Activated B cell treated with CpG ODN at 0.5 μM for 24 hours (primary cell): ENCODE measurements at regions of chr3 and their contacts with region 1.

Region 1: GRCh38 chr3:100360757-100361496 is 26.4 kb downstream of the NIT2 start:
- DNase-seq: no peak
- ATAC-seq: no peak
- H3K4me3 Mint-ChIP-seq: no peak overlapping the region
- H3K27ac Mint-ChIP-seq: no peak overlapping the region
- H3K4me1 Mint-ChIP-seq: no peaks in the 10 kb centered on the region
- H3K27me3 Mint-ChIP-seq: no peaks in the 10 kb centered on the region
- CTCF ChIP-seq: no peak

Region 2: DNA sequence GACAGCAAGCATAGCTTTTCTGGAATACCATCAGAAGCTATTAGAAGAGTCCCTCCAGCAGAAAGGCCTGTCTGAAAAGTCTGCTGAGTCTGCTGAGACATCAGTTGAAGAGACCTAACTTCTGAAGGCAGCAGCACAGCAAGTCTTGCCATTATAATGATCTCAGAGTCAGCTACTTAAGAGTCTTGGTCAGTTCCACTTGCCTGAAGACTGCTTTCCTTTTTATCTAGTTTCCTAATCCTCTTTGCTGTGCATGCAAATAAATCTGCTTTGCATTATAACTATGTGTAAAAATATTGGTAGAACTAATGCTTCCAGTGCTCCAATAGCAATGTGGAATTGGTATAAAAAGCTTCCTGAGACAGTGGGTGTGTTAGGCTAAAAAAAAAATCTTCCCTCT is 1732.6 kb before region 1 on chr3:
- CTCF ChIA-PET with region 1: no interaction called
- POLR2A ChIA-PET with region 1: no interaction called
- intact Hi-C with region 1: no loop called
- DNase-seq: no peak
- ATAC-seq: no peak
- H3K4me3 Mint-ChIP-seq: no peak overlapping the region
- H3K27ac Mint-ChIP-seq: no peak overlapping the region
- H3K4me1 Mint-ChIP-seq: no peaks in the 10 kb centered on the region
- H3K27me3 Mint-ChIP-seq: no peaks in the 10 kb centered on the region
- CTCF ChIP-seq: no peak

Region 3: DNA sequence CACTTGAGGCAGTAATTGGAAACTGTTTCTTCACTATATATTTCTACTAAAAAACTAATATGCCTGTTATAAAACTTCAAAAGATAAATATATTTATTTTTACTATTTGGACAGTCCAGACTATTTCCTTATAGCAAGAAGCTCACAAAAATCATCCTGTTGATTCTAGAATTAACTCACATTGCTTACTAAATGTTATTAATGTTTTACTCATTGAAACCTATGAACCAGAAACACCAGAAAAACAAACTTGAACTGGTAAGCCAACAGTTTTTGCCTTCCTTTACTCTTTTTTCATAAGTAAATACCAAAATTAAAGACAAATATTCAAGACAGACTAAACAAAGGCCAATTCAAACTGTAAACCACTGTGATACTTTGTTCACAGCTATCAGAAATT is 13.6 kb after region 1 on chr3:
- CTCF ChIA-PET with region 1: no interaction called
- POLR2A ChIA-PET with region 1: no interaction called
- intact Hi-C with region 1: loop called (anchors 2 kb)
- DNase-seq: no peak
- ATAC-seq: no peak
- H3K4me3 Mint-ChIP-seq: no peak overlapping the region
- H3K27ac Mint-ChIP-seq: no peak overlapping the region
- H3K4me1 Mint-ChIP-seq: no peaks in the 10 kb centered on the region
- H3K27me3 Mint-ChIP-seq: no peaks in the 10 kb centered on the region
- CTCF ChIP-seq: no peak